ENCODE measurements at regions of chr2 and their contacts with region 1.

Region 1: GRCh38 chr2:199471443-199472057 is 13.8 kb upstream of the SATB2 start:
- DNase-seq: peak; percentile 94
- ATAC-seq: peak; percentile 76
- H3K4me3 Mint-ChIP-seq: peak overlapping the region; percentile 76
- H3K27ac Mint-ChIP-seq: no peak overlapping the region
- H3K4me1 Mint-ChIP-seq: peaks cover 39% of the 10 kb centered on the region
- H3K27me3 Mint-ChIP-seq: peaks cover 70% of the 10 kb centered on the region
- CTCF ChIP-seq: peak; percentile 45

Region 2: GRCh38 chr2:198309673-198310280 is 1161.8 kb before region 1 on chr2:
- CTCF ChIA-PET with region 1: interaction called, 12 read pairs
- POLR2A ChIA-PET with region 1: no interaction called
- DNase-seq: peak; percentile 53
- ATAC-seq: peak; percentile 40; the same call in 1 of the 2 replicates
- H3K4me3 Mint-ChIP-seq: no peak overlapping the region
- H3K27ac Mint-ChIP-seq: no peak overlapping the region
- H3K4me1 Mint-ChIP-seq: peaks cover 20% of the 10 kb centered on the region
- H3K27me3 Mint-ChIP-seq: no peaks in the 10 kb centered on the region
- CTCF ChIP-seq: peak; percentile 73

Region 3: GRCh38 chr2:198873503-198874471 is 597.8 kb before region 1 on chr2:
- CTCF ChIA-PET with region 1: no interaction called
- POLR2A ChIA-PET with region 1: no interaction called
- DNase-seq: no peak
- ATAC-seq: no peak
- H3K4me3 Mint-ChIP-seq: no peak overlapping the region
- H3K27ac Mint-ChIP-seq: no peak overlapping the region
- H3K4me1 Mint-ChIP-seq: no peaks in the 10 kb centered on the region
- H3K27me3 Mint-ChIP-seq: no peaks in the 10 kb centered on the region
- CTCF ChIP-seq: no peak

Region 4: GRCh38 chr2:199388728-199389268 is 82.8 kb before region 1 on chr2:
- CTCF ChIA-PET with region 1: no interaction called
- POLR2A ChIA-PET with region 1: no interaction called
- DNase-seq: no peak
- ATAC-seq: no peak
- H3K4me3 Mint-ChIP-seq: no peak overlapping the region
- H3K27ac Mint-ChIP-seq: no peak overlapping the region
- H3K4me1 Mint-ChIP-seq: no peaks in the 10 kb centered on the region
- H3K27me3 Mint-ChIP-seq: no peaks in the 10 kb centered on the region
- CTCF ChIP-seq: no peak

Region 5: DNA sequence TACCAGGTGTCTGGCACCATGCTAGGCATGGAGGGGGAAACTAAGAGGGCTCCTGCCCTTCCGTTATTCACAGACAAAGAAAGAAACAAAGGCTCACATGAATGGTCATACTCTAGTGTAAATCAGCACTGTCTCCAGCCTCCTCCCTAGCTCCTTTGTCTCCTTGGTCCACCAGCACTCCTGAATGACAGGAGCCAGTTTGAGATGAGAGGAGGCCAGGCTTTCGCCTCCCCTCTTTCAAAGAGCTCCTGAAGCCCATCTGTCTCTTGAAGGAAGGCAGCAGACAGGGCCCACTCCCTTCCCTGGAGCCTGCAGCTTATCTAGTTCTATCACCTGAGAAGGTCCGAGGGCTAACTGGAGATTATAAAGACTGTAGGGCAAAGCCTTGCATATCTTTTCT is 32.5 kb before region 1 on chr2:
- CTCF ChIA-PET with region 1: interaction called, 11 read pairs
- POLR2A ChIA-PET with region 1: no interaction called
- DNase-seq: no peak
- ATAC-seq: peak; percentile 65
- H3K4me3 Mint-ChIP-seq: no peak overlapping the region
- H3K27ac Mint-ChIP-seq: peak overlapping the region; percentile 82
- H3K4me1 Mint-ChIP-seq: peaks cover 58% of the 10 kb centered on the region
- H3K27me3 Mint-ChIP-seq: no peaks in the 10 kb centered on the region
- CTCF ChIP-seq: no peak

Region 6: DNA sequence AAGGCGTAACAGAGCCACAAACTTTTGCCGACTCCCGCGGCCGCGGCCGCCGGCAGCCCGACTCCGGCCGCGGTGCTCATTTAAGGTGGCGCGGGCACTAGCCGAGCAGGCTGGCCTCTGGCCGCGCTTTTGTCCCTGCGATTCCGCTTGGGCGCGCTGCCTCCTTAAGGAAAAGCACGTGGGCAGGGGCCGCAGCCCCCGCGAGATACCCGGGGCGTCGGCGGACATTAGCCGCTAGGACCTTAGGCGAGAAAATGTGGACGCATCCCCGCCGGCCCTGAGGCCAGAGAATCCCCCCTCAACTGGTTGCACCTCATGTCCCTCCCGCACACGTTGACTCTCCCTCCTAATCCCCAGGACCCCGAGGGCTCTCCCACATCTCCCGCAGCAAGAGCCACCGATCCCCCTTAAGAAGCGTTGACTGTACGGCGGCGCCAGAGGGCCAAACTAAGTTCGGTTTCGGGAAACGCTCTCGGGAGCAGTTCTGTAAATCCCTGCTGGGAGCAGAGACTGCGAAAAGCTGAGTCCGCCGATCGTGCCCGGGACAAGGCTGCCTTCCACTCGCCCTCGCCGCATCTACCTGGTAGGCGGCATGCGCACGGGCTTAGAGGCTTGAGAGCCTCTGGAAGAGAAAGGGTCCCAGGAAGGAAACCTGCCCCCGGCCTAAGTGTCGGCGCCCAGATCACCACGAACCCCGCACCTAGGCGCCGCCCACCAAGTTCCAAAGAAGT is 12.1 kb before region 1 on chr2:
- CTCF ChIA-PET with region 1: interaction called, 30 read pairs
- POLR2A ChIA-PET with region 1: interaction called, 5 read pairs
- DNase-seq: peak; percentile 91
- ATAC-seq: peak; percentile 2
- H3K4me3 Mint-ChIP-seq: peak overlapping the region; percentile 88
- H3K27ac Mint-ChIP-seq: peak overlapping the region; percentile 94
- H3K4me1 Mint-ChIP-seq: peaks cover 24% of the 10 kb centered on the region
- H3K27me3 Mint-ChIP-seq: peaks cover 65% of the 10 kb centered on the region
- CTCF ChIP-seq: no peak

Region 7: GRCh38 chr2:199488772-199489400 is 17.3 kb after region 1 on chr2:
- CTCF ChIA-PET with region 1: interaction called, 136 read pairs
- POLR2A ChIA-PET with region 1: interaction called, 3 read pairs
- DNase-seq: peak; percentile 80
- ATAC-seq: peak; percentile 82
- H3K4me3 Mint-ChIP-seq: no peak overlapping the region
- H3K27ac Mint-ChIP-seq: no peak overlapping the region
- H3K4me1 Mint-ChIP-seq: no peaks in the 10 kb centered on the region
- H3K27me3 Mint-ChIP-seq: no peaks in the 10 kb centered on the region
- CTCF ChIP-seq: peak; percentile 83

Region 8: DNA sequence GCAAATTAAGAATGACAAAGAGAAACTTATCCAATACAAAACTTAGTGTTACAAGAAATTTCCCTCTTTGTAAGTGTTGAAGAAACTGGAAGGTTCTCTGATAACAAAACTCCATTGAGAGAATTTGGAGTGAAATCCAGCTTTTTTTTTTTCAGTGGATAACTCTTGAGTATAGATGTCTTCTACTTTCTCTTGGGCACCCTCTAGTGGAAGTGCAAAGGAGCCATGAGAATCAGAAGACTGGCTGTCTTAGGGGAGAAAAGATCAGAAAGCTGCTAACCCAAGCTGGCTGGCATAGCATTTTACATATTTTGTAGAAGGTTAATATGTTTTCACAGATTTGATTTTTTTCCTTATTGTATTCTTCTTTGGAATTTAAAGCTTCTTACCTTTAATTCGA is 125.0 kb after region 1 on chr2:
- CTCF ChIA-PET with region 1: interaction called, 12 read pairs
- POLR2A ChIA-PET with region 1: no interaction called
- DNase-seq: peak; percentile 28
- ATAC-seq: peak; percentile 84
- H3K4me3 Mint-ChIP-seq: no peak overlapping the region
- H3K27ac Mint-ChIP-seq: no peak overlapping the region
- H3K4me1 Mint-ChIP-seq: no peaks in the 10 kb centered on the region
- H3K27me3 Mint-ChIP-seq: peaks cover 9% of the 10 kb centered on the region; the same call in 1 of the 2 replicates
- CTCF ChIP-seq: peak; percentile 18; the same call in 1 of the 2 replicates

Region 9: GRCh38 chr2:199602271-199602895 is 130.8 kb after region 1 on chr2:
- CTCF ChIA-PET with region 1: interaction called, 15 read pairs
- POLR2A ChIA-PET with region 1: no interaction called
- DNase-seq: peak; percentile 25
- ATAC-seq: peak; percentile 90
- H3K4me3 Mint-ChIP-seq: peak overlapping the region; percentile 34; the same call in 1 of the 2 replicates
- H3K27ac Mint-ChIP-seq: no peak overlapping the region; the same call in 1 of the 2 replicates
- H3K4me1 Mint-ChIP-seq: peaks cover 20% of the 10 kb centered on the region
- H3K27me3 Mint-ChIP-seq: peaks cover 33% of the 10 kb centered on the region
- CTCF ChIP-seq: no peak

Measured in WTC11 (cell line).